ENCODE measurements at regions of chr22 and their contacts with region 1.

Region 1: DNA sequence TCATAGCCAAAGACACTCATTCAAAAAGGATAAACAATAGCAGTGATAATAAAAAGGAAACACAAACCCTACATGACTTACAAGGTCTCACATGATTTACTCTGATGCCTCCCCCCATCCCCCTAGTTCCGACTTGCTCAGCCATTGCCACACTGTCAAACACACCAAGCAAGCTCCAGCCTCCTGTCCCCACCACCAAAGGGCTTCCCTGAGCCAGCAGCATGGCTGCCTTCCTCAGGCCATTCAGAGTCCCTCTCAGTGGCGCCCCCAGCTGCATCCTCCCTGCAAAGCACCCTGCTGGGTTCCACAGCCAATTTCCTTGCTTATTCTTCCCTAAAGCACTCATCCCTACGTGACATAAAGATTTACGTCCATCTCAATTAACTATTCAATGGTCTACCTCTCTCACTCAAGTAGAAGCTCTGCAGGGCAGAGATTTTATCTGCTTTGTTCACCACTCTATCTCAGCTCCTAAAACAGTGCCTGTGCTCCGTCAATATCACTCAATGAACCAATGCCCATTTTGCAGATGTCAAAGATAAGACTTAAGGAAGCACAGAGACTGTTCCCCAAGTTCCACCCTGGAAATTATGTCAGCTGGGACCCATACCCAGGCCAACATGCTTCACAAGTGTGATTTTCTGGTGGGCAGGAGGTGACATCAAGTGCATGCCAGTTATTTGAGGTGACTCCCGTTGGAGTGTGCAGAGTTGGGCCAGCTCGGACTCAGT is 106.9 kb downstream of the SYN3 start:
- DNase-seq: peak; percentile 21
- H3K4me3 ChIP-seq: no peak overlapping the region
- H3K27ac ChIP-seq: no peak overlapping the region
- H3K4me1 ChIP-seq: no peaks in the 10 kb centered on the region
- H3K27me3 ChIP-seq: peaks cover 3% of the 10 kb centered on the region
- CTCF ChIP-seq: peak; percentile 37; the same call in 1 of the 2 replicates

Region 2: DNA sequence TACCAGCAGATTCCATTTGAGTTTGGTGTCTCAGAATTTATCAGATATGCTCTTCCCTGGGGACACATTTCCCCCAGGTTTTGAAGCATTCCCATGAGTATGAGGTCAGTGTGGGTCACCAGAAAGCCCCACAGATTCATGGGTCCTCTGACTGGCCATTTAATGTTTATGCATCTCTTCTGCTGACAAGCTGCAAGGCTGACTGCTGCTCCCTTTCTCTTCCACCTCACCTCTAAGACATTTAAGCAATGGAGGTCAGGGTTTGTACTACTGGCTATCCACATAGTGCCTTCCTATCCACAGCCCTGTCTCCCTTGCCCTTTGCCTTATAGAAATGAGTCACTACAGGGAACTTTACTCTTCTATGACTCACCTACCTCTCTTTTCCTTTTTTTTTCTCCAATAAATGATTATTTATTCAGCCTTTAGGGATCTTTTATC is 255.8 kb before region 1 on chr22:
- CTCF ChIA-PET with region 1: interaction called, 12 read pairs
- POLR2A ChIA-PET with region 1: no interaction called
- intact Hi-C with region 1: no loop called
- DNase-seq: no peak
- H3K4me3 ChIP-seq: no peak overlapping the region
- H3K27ac ChIP-seq: no peak overlapping the region
- H3K4me1 ChIP-seq: no peaks in the 10 kb centered on the region
- H3K27me3 ChIP-seq: no peaks in the 10 kb centered on the region
- CTCF ChIP-seq: no peak

Region 3: DNA sequence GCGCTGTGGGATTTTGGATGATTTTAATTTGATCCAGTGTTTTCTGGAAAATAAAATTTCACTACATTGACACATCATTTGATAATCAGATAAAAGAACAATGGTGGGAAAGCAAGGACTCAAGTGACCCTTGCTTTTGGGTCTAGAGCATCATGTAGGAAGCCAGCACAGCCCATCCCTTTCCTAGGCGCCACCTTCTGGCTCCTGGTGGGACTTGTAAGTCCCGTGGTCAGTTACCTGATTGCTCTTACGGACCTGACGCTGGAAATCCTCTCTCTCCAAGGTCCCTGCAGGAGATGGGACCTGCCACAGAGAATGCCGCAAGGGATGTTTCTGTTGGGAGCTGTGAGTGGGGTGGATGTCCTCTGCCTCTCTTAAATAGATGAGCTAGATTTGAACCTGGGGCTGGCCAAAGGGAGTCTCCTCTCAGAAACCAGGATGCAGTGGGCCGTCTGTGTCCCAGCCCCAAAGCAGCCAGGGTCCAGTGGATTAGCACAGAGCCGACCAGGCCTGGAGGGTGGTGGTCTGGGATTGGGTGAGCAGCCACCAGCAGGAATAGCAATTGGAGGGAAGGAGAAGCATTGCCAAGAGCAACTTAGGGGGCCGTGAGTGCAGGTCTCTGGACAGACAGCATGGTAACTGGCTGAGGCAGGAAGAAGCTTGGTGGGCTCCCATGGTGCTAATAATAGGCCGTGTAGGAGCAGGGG is 128.1 kb before region 1 on chr22:
- CTCF ChIA-PET with region 1: no interaction called
- POLR2A ChIA-PET with region 1: no interaction called
- intact Hi-C with region 1: no loop called
- DNase-seq: peak; percentile 16
- H3K4me3 ChIP-seq: no peak overlapping the region
- H3K27ac ChIP-seq: no peak overlapping the region
- H3K4me1 ChIP-seq: no peaks in the 10 kb centered on the region
- H3K27me3 ChIP-seq: no peaks in the 10 kb centered on the region
- CTCF ChIP-seq: peak; percentile 52

Measured in A673 (cell line).